ENCODE measurements at regions of chr20 and their contacts with region 1.

Region 1: GRCh38 chr20:25065625-25066338 is 7.8 kb upstream of the ACSS1 start:
- DNase-seq: peak; percentile 55 to 85 (median 64)
- ATAC-seq: peak; percentile 69
- H3K4me3 ChIP-seq: no peak overlapping the region
- H3K4me3 Mint-ChIP-seq: no peak overlapping the region
- H3K27ac ChIP-seq: no peak overlapping the region
- H3K27ac Mint-ChIP-seq: no peak overlapping the region
- H3K4me1 ChIP-seq: peaks cover 6% of the 10 kb centered on the region
- H3K4me1 Mint-ChIP-seq: peaks cover 7% of the 10 kb centered on the region
- H3K27me3 ChIP-seq: peaks cover 6 to 13% of the 10 kb centered on the region in 2 experiments
- H3K27me3 Mint-ChIP-seq: peaks cover 26% of the 10 kb centered on the region
- CTCF ChIP-seq: peak; percentile 75

Region 2: DNA sequence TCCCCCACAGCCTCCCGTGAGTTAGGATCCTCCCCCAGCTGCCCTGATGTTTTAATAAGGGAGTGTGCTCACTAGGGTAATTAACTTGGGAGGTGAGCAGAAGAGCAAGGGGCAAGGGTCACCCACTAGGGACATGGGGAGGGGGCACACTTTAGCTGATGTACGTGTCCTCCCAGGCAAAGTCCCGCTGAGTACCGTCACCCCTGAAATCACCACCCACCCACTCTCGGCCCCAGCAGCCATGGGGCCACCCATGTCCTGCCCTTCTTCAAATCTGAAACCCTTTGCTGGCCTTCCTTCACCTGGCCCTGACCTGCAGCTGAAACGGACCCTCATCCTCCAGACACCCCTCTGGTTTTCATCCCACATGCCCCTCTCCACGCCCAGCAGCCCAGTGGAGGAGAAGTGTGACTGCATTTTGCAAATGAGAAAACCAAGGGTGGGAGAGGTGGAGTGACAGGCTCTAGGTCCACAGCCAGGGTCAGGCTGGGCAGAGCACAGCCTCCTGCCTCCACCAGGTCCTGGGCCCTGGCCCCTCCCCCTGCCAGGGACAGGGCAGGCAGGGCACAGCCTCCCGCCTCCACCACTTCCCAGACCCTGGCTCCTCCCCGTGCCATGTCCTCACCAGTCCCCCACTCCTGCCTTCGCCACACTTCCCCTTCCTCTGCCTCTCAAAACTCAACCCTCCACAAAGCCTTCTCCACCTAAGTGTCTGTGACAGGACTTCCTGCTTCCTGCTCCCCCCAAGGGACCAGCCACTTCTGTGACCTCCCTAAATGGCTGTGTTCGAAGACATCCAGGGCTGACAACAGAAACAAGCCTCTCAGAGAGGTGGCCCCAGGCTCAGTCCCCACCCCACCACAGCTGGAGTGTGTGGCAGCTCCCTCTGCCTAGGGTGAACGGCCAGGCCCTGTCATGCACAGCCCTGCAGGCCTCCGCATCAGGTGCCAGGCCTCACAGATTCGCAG is 23.0 kb before region 1 on chr20:
- CTCF ChIA-PET with region 1: no interaction called
- POLR2A ChIA-PET with region 1: no interaction called
- intact Hi-C with region 1: no loop called
- DNase-seq: peak in 13 of 14 experiments; percentile 14 to 73 (median 39)
- ATAC-seq: peak; percentile 86
- H3K4me3 ChIP-seq: no peak overlapping the region
- H3K4me3 Mint-ChIP-seq: peak overlapping the region; percentile 80
- H3K27ac ChIP-seq: peak overlapping the region; percentile 78 to 80
- H3K27ac Mint-ChIP-seq: peak overlapping the region; percentile 95
- H3K4me1 ChIP-seq: peaks cover 59% of the 10 kb centered on the region
- H3K4me1 Mint-ChIP-seq: peaks cover 56% of the 10 kb centered on the region
- H3K27me3 ChIP-seq: no peaks in the 10 kb centered on the region
- H3K27me3 Mint-ChIP-seq: no peaks in the 10 kb centered on the region
- CTCF ChIP-seq: no peak

Region 3: GRCh38 chr20:25178563-25179438 is 113.0 kb after region 1 on chr20:
- CTCF ChIA-PET with region 1: no interaction called
- POLR2A ChIA-PET with region 1: no interaction called
- intact Hi-C with region 1: loop called (anchors 1 to 5 kb)
- DNase-seq: peak in 4 of 14 experiments; percentile 24 to 64 (median 61)
- ATAC-seq: peak; percentile 76
- H3K4me3 ChIP-seq: no peak overlapping the region
- H3K4me3 Mint-ChIP-seq: no peak overlapping the region
- H3K27ac ChIP-seq: no peak overlapping the region
- H3K27ac Mint-ChIP-seq: no peak overlapping the region
- H3K4me1 ChIP-seq: no peaks in the 10 kb centered on the region
- H3K4me1 Mint-ChIP-seq: no peaks in the 10 kb centered on the region
- H3K27me3 ChIP-seq: no peaks in the 10 kb centered on the region
- H3K27me3 Mint-ChIP-seq: peaks cover 18% of the 10 kb centered on the region
- CTCF ChIP-seq: peak; percentile 75